Common myeloid progenitor, CD34-positive (primary cell): ENCODE measurements at regions of chr1 and their contacts with region 1.

Region 1: GRCh38 chr1:23825076-23825761 is at the start of gene HMGCL:
- DNase-seq: peak; percentile 91 to 95 (median 94)
- H3K4me3 ChIP-seq: peak within 1 kb of the TSS; percentile 57 to 99 (median 97)
- H3K27ac ChIP-seq: peak within 1 kb of the TSS; percentile 88 to 97
- H3K4me1 ChIP-seq: peaks cover 4 to 18% (median 15%) of the 10 kb centered on the region in 4 experiments
- H3K27me3 ChIP-seq: no peaks in the 10 kb centered on the region

Region 2: DNA sequence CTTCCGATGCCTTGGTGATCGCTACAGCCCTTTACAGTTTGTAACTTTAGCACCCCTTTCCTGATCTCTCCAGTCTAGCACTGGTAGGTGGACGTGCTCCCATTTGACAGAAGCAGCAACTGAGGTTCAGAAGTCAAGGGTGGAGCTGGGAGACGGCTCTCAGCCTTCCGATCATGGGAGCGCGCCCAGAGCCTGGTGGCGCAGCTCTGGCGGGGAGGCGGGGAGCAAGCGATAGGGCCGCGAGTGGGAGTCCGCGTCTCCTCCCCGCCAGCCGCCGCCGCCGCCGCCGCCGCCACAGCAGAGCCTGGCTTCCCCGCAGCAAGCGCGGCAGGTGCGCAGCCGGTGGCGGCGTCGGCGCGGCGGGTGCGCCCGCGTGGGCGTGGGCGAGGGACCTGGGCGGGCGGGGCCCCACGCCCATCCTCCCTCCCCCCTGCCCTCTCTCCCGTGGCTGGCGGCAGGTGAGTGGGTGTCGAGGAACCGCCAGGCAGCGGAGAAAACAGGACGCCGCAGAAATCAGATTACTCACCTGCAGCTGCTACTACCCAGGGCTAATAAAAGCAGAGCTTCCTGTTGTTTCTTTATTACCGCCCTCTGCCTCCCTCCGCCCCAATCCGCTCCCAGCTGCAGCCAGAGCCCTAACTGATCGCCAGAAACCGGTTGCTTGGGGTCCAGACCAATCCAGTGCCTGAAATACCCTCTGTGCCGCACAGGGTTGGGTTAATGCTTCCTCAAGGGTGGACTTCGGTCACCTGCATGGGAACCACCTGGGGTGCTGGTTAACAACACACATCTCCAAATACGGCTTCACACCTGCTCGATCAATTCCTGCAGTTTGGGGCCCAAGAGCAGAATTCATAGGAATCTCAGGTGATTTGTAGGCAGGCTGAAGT is 205.7 kb before region 1 on chr1:
- CTCF ChIA-PET with region 1: no interaction called
- POLR2A ChIA-PET with region 1: no interaction called
- DNase-seq: peak; percentile 28 to 89 (median 76)
- H3K4me3 ChIP-seq: peak overlapping the region in 4 of 7 experiments; percentile 7 to 59 (median 38)
- H3K27ac ChIP-seq: no peak overlapping the region
- H3K4me1 ChIP-seq: peaks cover 0 to 10% (median 6%) of the 10 kb centered on the region in 4 experiments
- H3K27me3 ChIP-seq: peaks cover 0 to 46% (median 22%) of the 10 kb centered on the region in 5 experiments

Region 3: GRCh38 chr1:23838401-23838866 is 13.2 kb after region 1 on chr1:
- CTCF ChIA-PET with region 1: interaction called, 6 read pairs
- POLR2A ChIA-PET with region 1: interaction called, 11 read pairs
- DNase-seq: peak; percentile 90 to 96 (median 95)
- H3K4me3 ChIP-seq: peak overlapping the region in 6 of 7 experiments; percentile 1 to 75 (median 53)
- H3K27ac ChIP-seq: peak overlapping the region in 1 of 2 experiments; percentile 26
- H3K4me1 ChIP-seq: peaks cover 0 to 12% (median 7%) of the 10 kb centered on the region in 4 experiments
- H3K27me3 ChIP-seq: no peaks in the 10 kb centered on the region